HEK293T (cell line): ENCODE measurements at regions of chr6 and their contacts with region 1.

Region 1: GRCh38 chr6:105087571-105088211 is 92.1 kb downstream of the POPDC3 start:
- DNase-seq: peak; percentile 45

Region 2: DNA sequence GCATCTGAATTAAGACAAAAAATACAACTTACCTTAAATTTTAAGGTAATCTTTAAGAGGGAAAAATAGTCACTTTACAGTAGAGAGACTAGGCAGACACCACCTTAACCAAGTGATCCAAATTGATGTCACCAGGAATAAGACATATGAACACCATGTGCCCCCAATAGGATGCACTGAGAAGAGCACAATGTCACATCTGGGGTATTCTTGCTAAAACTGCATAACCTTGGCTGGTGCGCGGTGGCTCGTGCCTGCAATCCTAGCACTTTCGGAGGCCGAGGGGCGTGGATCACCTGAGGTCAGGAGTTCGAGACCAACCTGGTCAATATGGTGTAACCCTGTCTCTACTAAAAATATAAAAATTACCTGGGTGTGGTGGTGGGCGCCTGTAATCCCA is 183.5 kb after region 1 on chr6:
- CTCF ChIA-PET with region 1: interaction called, 11 read pairs
- POLR2A ChIA-PET with region 1: no interaction called
- DNase-seq: no peak

Region 3: GRCh38 chr6:105363100-105363754 is 275.5 kb after region 1 on chr6:
- CTCF ChIA-PET with region 1: interaction called, 12 read pairs
- POLR2A ChIA-PET with region 1: no interaction called
- DNase-seq: no peak

Region 4: DNA sequence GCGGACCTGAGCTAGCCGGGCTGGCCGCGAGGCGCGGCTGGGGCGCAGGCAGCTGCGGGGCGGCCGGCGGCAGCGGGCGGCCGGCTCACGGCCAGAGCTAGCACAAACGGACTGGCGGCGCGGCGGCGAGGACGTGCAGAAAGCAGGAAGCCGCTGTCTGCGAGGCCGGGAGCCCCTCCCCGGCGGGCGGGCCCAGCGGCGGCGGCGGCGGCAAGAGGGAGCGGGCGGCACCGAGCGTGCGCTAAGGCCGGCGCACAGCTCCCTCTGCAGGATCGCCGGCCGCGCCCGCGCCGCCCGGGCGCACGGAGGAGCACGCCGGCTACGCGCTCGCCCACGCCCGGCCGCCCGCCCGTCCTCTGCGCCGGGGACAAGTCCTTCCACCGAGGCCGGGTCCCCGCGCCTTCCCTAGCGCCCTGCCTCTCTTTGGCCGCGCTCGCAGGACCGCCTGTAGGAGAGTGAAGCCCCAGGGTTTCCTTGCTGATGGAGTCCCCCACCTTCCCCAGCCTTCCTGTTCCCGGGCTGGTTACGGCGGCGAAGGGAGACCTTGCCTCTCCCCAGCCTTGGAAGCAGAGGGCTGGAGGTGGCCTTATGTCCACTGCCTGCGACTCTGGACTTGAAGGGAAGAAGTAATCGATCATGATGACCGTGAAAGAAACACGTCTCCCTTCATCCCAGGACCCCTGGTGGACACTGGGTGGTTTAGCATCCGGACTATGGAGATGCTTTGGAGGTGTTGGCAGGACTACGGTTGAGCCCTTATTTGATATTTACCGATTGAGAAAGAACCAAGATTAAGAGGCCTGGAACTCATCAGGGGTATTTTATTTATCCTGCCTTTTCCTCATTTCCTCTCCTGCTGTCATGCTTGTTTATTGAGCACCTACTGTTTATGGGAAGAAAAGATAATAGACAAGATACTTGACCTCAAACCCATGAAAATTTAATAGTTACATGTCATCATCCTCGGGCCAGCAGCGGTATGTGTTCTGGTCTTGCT is 315.5 kb after region 1 on chr6 and contains the start of gene PREP:
- CTCF ChIA-PET with region 1: interaction called, 11 read pairs
- POLR2A ChIA-PET with region 1: interaction called, 6 read pairs
- DNase-seq: peak; percentile 87